ENCODE measurements at regions of chr6 and their contacts with region 1.

Region 1: DNA sequence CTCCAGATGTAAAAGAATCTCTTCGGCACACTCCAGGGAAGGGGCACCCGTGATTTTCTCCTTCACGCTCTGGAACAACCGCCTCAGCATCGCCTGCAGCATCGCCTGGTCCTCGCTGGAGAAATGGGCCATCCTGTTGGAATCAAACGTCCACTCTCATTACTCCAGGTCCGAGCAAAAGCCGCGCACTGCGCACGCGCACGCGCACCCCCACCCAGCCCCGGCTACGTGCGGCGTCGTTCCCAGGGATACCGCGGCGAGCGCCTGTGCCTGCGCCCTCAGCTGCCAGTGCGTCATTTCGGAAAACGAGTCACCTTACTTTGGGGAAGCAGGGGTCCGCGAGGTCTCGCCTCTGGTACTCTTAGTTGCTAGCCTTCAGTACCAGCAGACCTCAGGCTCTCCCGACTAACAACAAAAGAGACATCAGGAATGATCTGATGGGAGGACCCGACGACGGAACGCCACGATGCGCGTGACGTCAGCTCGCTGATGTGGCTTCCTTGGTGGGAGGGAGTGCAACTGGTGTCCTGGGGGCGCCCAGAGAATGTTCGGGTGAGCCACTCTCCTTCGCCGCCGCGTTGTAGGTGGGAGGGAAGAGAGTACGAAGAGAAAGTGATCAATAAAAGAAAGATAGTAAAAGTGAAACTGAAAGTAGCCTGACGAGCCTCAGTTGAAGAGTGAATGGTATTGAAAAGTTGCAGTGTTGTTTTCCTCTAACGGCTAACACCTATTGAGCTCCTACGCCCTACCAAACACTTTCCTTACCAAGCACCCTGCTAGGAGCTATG is at the start of gene TBC1D32:
- DNase-seq: peak; percentile 84
- H3K4me3 Mint-ChIP-seq: peak within 1 kb of the TSS; percentile 95
- H3K27ac Mint-ChIP-seq: peak within 1 kb of the TSS; percentile 99
- H3K4me1 Mint-ChIP-seq: peaks cover 32% of the 10 kb centered on the region
- H3K27me3 Mint-ChIP-seq: peaks cover 5% of the 10 kb centered on the region
- total RNA-seq, gene TBC1D32: 6.6 and 8.3 TPM in 2 replicates

Region 2: DNA sequence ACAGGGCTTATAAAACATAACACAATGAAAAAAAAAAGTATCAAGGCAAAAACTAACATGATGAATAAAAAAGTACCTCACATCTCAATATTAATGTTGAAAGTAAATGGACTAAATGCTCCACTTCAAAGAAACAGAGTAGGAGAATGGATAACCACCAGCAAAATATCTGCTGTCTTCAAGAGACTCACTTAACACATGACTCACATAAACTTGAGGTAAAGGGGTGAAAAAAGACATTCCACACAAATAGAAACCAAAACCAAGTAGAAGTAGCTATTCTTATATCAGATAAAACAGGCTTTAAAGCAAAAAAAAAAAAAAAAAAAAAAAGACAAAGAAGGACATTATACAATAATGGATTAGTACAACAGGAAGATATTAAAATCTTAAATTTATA is 87.1 kb before region 1 on chr6:
- intact Hi-C with region 1: loop called (anchors 5 kb)
- DNase-seq: no peak
- H3K4me3 Mint-ChIP-seq: no peak overlapping the region
- H3K27ac Mint-ChIP-seq: no peak overlapping the region
- H3K4me1 Mint-ChIP-seq: peaks cover 13% of the 10 kb centered on the region
- H3K27me3 Mint-ChIP-seq: no peaks in the 10 kb centered on the region

Region 3: DNA sequence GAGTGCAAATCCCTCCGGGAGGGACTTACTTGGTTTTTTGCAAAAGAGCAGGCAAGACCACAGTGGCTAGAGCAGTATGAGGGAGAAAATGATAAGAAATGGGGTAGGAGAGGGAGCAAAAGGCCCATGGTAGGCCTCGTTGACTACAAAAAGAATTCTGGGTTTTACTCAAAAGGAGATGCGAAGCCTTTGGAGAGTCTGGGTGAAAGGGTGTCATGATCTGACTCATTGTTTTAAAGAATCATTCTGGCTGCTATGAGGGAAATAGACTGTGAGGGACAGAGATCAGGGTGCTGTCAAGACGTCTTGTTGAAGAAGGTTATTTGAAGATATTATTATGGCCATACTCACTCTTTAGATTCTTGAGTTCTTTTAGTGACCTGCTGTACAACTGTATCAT is 13.2 kb before region 1 on chr6:
- intact Hi-C with region 1: loop called (anchors 1 kb)
- DNase-seq: no peak
- H3K4me3 Mint-ChIP-seq: no peak overlapping the region
- H3K27ac Mint-ChIP-seq: peak overlapping the region; percentile 57
- H3K4me1 Mint-ChIP-seq: peaks cover 13% of the 10 kb centered on the region
- H3K27me3 Mint-ChIP-seq: no peaks in the 10 kb centered on the region